Calu3 (cell line): ENCODE measurements at regions of chr6 and their contacts with region 1.

Region 1: GRCh38 chr6:87840324-87840723 is 138.3 kb upstream of the AKIRIN2 start:
- DNase-seq: no peak
- H3K4me3 Mint-ChIP-seq: no peak overlapping the region
- H3K27ac Mint-ChIP-seq: no peak overlapping the region
- H3K4me1 Mint-ChIP-seq: no peaks in the 10 kb centered on the region
- H3K27me3 Mint-ChIP-seq: peaks cover 15% of the 10 kb centered on the region
- CTCF ChIP-seq: no peak

Region 2: GRCh38 chr6:87684895-87685654 is 155.2 kb before region 1 on chr6:
- CTCF ChIA-PET with region 1: interaction called, 10 read pairs
- intact Hi-C with region 1: no loop called
- DNase-seq: no peak
- H3K4me3 Mint-ChIP-seq: no peak overlapping the region
- H3K27ac Mint-ChIP-seq: no peak overlapping the region
- H3K4me1 Mint-ChIP-seq: peaks cover 30% of the 10 kb centered on the region
- H3K27me3 Mint-ChIP-seq: no peaks in the 10 kb centered on the region
- CTCF ChIP-seq: no peak